Breast epithelium (tissue), 4 donors: ENCODE measurements at regions of chr5 and their contacts with region 1.

Region 1: GRCh38 chr5:149551200-149552037 is at the start of gene CSNK1A1:
- DNase-seq: peak; percentile 98
- H3K4me3 ChIP-seq: peak within 1 kb of the TSS; percentile 62 to 99 (median 87)
- H3K27ac ChIP-seq: peak within 1 kb of the TSS; percentile 97 to 99
- H3K4me1 ChIP-seq: no peaks in the 10 kb centered on the region
- H3K27me3 ChIP-seq: no peaks in the 10 kb centered on the region
- CTCF ChIP-seq: peak; percentile 95 to 99 (median 96)
- POLR2A ChIP-seq: peak; percentile 89
- total RNA-seq, gene CSNK1A1: 151 to 350 (median 287) TPM

Region 2: DNA sequence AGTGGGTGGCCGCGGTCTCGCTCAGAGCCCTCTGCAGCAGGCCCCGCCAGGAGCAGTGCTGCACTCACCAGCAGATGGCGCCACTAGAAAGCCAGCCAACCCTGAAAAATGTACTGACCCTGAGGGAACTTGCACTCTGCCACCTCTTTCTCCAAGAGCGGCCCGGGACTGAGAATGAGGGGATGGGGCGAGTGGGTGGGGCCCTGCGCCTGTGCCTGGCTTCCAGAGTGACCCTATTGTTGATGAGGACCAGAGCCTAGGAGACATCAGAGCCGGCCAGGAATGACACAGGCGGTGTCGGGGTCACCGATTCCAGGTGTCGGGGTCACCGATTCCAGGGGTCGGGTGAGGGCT is 169.5 kb before region 1 on chr5:
- intact Hi-C with region 1: loop called (anchors 5 kb)
- DNase-seq: peak; percentile 70 to 83
- H3K4me3 ChIP-seq: peak overlapping the region in 1 of 3 donors; percentile 7
- H3K27ac ChIP-seq: peak overlapping the region; percentile 62 to 91
- H3K4me1 ChIP-seq: peaks cover 0 to 8% of the 10 kb centered on the region in 2 donors
- H3K27me3 ChIP-seq: no peaks in the 10 kb centered on the region
- CTCF ChIP-seq: peak; percentile 86 to 91 (median 90)
- POLR2A ChIP-seq: no peak

Region 3: GRCh38 chr5:150036513-150036912 is 485.1 kb after region 1 on chr5:
- intact Hi-C with region 1: no loop called
- DNase-seq: no peak
- H3K4me3 ChIP-seq: no peak overlapping the region
- H3K27ac ChIP-seq: peak overlapping the region in 1 of 2 donors; percentile 31
- H3K4me1 ChIP-seq: no peaks in the 10 kb centered on the region
- H3K27me3 ChIP-seq: no peaks in the 10 kb centered on the region
- CTCF ChIP-seq: no peak
- POLR2A ChIP-seq: no peak